ENCODE measurements at regions of chr6 and their contacts with region 1.

Region 1: GRCh38 chr6:79570129-79571029 is 33.1 kb upstream of the LCA5 start:
- DNase-seq: no peak
- ATAC-seq: peak in 6 of 8 donors; percentile 37 to 74 (median 61)
- H3K4me3 ChIP-seq: peak overlapping the region in 9 of 10 donors; percentile 6 to 48 (median 37)
- H3K27ac ChIP-seq: no peak overlapping the region
- H3K4me1 ChIP-seq: peaks cover 0 to 15% (median 9%) of the 10 kb centered on the region in 9 donors
- H3K27me3 ChIP-seq: no peaks in the 10 kb centered on the region
- CTCF ChIP-seq: peak; percentile 51 to 85 (median 72)

Region 2: GRCh38 chr6:79672631-79673111 is 102.3 kb after region 1 on chr6:
- intact Hi-C with region 1: loop called in 5 of 10 experiments (anchors 1 to 10 kb)
- DNase-seq: no peak
- ATAC-seq: peak in 3 of 8 donors; percentile 23 to 44 (median 42)
- H3K4me3 ChIP-seq: no peak overlapping the region
- H3K27ac ChIP-seq: peak overlapping the region in 2 of 10 donors; percentile 50 to 61
- H3K4me1 ChIP-seq: peaks cover 0 to 33% (median 17%) of the 10 kb centered on the region in 9 donors
- H3K27me3 ChIP-seq: no peaks in the 10 kb centered on the region
- CTCF ChIP-seq: peak; percentile 16 to 61 (median 45)

Region 3: GRCh38 chr6:79687759-79688158 is 117.4 kb after region 1 on chr6:
- intact Hi-C with region 1: no loop called
- DNase-seq: no peak
- ATAC-seq: peak in 2 of 8 donors; percentile 50 to 76
- H3K4me3 ChIP-seq: no peak overlapping the region
- H3K27ac ChIP-seq: no peak overlapping the region
- H3K4me1 ChIP-seq: peaks cover 0 to 32% (median 16%) of the 10 kb centered on the region in 9 donors
- H3K27me3 ChIP-seq: no peaks in the 10 kb centered on the region
- CTCF ChIP-seq: no peak

Region 4: GRCh38 chr6:79702691-79703090 is 132.3 kb after region 1 on chr6:
- intact Hi-C with region 1: loop called in 1 of 10 experiments (anchors 5 kb)
- DNase-seq: no peak
- ATAC-seq: no peak
- H3K4me3 ChIP-seq: no peak overlapping the region
- H3K27ac ChIP-seq: no peak overlapping the region
- H3K4me1 ChIP-seq: peaks cover 0 to 6% (median 0%) of the 10 kb centered on the region in 9 donors
- H3K27me3 ChIP-seq: no peaks in the 10 kb centered on the region
- CTCF ChIP-seq: no peak

Region 5: GRCh38 chr6:79713701-79714322 is 143.4 kb after region 1 on chr6:
- intact Hi-C with region 1: loop called (anchors 1 to 10 kb)
- DNase-seq: peak in 1 of 2 donors; percentile 52
- ATAC-seq: peak in 6 of 8 donors; percentile 53 to 81 (median 72)
- H3K4me3 ChIP-seq: no peak overlapping the region
- H3K27ac ChIP-seq: no peak overlapping the region
- H3K4me1 ChIP-seq: peaks cover 0 to 16% (median 0%) of the 10 kb centered on the region in 9 donors
- H3K27me3 ChIP-seq: no peaks in the 10 kb centered on the region
- CTCF ChIP-seq: peak in 8 of 9 donors; percentile 62 to 84 (median 72)

Region 6: GRCh38 chr6:79813854-79814709 is 243.7 kb after region 1 on chr6:
- intact Hi-C with region 1: loop called in 5 of 10 experiments (anchors 2 to 10 kb)
- DNase-seq: peak; percentile 33 to 70
- ATAC-seq: peak in 6 of 8 donors; percentile 53 to 75 (median 68)
- H3K4me3 ChIP-seq: no peak overlapping the region
- H3K27ac ChIP-seq: no peak overlapping the region
- H3K4me1 ChIP-seq: no peaks in the 10 kb centered on the region
- H3K27me3 ChIP-seq: no peaks in the 10 kb centered on the region
- CTCF ChIP-seq: peak; percentile 64 to 92 (median 85)